ENCODE measurements at regions of chr7 and their contacts with region 1.

Region 1: DNA sequence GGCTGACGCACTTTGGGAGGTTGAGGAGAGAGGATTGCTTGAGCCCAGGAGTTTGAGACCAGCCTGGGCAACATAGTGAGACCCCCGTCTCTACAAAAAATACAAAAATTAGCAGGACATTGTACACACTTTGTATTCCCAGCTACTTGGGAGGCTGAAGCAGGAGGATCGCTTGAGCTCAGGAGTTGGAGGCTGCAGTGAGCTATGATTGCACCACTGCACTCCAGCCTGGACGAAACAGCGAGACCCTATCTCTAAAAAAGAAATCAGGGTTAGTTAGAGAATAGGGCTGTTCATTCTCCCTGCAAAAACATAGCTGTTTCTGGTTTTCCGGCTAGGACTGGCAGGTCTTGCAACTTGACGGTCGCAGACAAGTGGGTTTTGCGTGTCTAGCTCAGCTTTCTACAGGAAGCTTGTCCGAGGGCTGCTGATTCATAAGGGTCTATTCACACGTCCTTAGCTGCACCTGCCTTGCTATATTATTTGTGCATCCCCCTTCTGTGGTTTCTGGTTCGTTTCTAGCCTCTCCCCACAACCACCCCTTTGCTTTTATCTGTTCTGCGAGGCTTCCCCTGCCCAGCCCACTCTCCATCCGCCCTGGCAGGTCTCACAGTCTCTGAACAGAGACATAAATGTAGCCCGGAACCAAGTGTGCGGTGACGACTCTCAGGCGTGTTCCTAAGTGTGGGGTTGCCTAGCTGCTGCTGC is 10.7 kb downstream of the AMZ1 start:
- DNase-seq: peak; percentile 50
- ATAC-seq: peak; percentile 94
- H3K4me3 Mint-ChIP-seq: peak overlapping the region; percentile 69
- H3K27ac Mint-ChIP-seq: peak overlapping the region; percentile 75
- H3K4me1 Mint-ChIP-seq: peaks cover 21% of the 10 kb centered on the region
- H3K27me3 Mint-ChIP-seq: peaks cover 2% of the 10 kb centered on the region
- CTCF ChIP-seq: no peak

Region 2: GRCh38 chr7:2519119-2519930 is 179.4 kb before region 1 on chr7 and contains the start of gene LFNG:
- CTCF ChIA-PET with region 1: no interaction called
- POLR2A ChIA-PET with region 1: no interaction called
- intact Hi-C with region 1: loop called (anchors 5 kb)
- DNase-seq: peak; percentile 94
- ATAC-seq: peak; percentile 75
- H3K4me3 Mint-ChIP-seq: peak within 1 kb of the TSS; percentile 96
- H3K27ac Mint-ChIP-seq: peak within 1 kb of the TSS; percentile 87
- H3K4me1 Mint-ChIP-seq: peaks cover 49% of the 10 kb centered on the region
- H3K27me3 Mint-ChIP-seq: no peaks in the 10 kb centered on the region
- CTCF ChIP-seq: no peak
- total RNA-seq, gene LFNG: 87.4 and 95.8 TPM in 2 replicates

Region 3: DNA sequence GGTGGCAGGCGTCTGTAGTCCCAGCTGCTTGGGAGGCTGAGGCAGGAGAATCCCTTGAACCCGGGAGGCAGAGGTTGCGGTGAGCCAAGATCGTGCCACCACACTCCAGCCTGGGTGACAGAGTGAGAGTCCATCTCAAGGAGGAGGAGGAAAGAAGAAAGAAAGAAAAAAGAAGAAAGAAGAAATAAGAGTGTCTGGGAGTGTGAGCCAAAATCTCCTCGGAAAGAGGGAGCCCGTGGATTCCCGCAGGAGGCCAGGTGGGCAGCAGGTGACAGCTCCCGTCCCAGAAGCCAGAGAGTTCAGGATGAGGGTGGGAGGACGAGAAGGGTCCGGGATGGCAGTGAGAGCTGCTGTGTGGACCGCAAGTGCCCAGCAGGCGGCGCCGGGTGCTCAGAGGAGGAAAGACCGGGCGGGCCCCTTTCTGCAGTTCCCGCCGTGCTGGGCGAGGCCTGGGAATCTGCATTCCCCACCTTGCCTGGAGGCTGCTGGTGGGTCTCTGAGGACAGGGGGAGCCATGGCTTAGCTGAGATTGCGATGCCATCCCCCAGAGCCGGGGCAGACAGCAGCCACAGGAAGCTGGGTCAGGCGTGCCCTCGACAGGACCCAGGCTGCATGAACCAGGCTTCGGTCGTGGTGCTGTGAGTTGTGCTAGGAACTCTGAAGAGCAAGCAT is 27.9 kb before region 1 on chr7:
- CTCF ChIA-PET with region 1: interaction called, 12 read pairs
- POLR2A ChIA-PET with region 1: interaction called, 5 read pairs
- intact Hi-C with region 1: no loop called
- DNase-seq: peak; percentile 65
- ATAC-seq: peak; percentile 87
- H3K4me3 Mint-ChIP-seq: no peak overlapping the region
- H3K27ac Mint-ChIP-seq: no peak overlapping the region
- H3K4me1 Mint-ChIP-seq: peaks cover 7% of the 10 kb centered on the region
- H3K27me3 Mint-ChIP-seq: peaks cover 11% of the 10 kb centered on the region
- CTCF ChIP-seq: peak; percentile 64

Region 4: DNA sequence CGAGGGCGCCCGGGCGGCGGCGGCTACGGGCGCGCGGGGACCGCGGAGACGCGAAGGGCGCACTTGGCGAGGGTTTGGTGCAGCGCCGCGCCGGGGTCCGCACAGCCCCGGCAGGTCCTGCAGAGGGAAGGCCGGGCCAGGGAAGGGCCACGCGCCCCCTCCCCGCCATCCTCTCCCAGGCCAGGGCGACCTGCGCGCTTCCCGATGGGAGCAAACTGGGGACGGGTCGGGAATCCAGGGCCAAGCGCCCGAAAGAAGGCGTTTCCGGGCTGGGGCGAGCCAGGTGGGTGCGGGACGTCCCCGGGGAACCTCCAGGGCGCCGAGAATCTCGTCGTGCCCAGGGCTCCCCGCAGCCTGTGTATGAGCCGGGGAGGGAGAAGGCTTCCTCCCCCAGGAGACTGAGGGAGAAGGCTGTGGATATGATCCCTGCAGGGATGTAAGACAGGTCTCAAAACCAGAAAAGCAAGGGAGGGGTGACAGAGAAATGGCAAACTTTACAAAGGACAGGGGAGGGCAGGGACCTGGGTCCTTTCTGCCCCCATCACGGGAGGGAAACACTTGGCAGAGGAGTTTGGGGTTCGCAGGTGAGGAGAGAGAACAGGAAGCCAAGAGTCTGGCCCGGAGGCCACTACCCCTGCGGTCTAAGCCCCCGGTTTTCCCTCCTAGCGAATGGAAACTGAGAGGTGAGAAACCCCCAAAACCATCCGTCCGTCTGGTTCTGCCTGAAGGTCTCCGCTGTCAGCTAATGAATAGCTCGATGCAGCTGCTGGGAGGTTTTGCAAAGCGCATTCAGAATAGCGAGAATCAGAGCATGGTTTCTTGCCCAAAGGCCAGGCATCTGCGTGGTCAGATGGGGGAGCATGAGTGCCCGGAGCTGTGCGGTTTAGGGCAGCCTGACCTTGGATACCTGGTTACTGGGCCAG is 10.1 kb before region 1 on chr7:
- CTCF ChIA-PET with region 1: no interaction called
- POLR2A ChIA-PET with region 1: interaction called, 15 read pairs
- intact Hi-C with region 1: loop called (anchors 1 kb)
- DNase-seq: no peak
- ATAC-seq: peak; percentile 65
- H3K4me3 Mint-ChIP-seq: peak overlapping the region; percentile 45
- H3K27ac Mint-ChIP-seq: no peak overlapping the region
- H3K4me1 Mint-ChIP-seq: peaks cover 8% of the 10 kb centered on the region
- H3K27me3 Mint-ChIP-seq: peaks cover 29% of the 10 kb centered on the region
- CTCF ChIP-seq: no peak

Region 5: DNA sequence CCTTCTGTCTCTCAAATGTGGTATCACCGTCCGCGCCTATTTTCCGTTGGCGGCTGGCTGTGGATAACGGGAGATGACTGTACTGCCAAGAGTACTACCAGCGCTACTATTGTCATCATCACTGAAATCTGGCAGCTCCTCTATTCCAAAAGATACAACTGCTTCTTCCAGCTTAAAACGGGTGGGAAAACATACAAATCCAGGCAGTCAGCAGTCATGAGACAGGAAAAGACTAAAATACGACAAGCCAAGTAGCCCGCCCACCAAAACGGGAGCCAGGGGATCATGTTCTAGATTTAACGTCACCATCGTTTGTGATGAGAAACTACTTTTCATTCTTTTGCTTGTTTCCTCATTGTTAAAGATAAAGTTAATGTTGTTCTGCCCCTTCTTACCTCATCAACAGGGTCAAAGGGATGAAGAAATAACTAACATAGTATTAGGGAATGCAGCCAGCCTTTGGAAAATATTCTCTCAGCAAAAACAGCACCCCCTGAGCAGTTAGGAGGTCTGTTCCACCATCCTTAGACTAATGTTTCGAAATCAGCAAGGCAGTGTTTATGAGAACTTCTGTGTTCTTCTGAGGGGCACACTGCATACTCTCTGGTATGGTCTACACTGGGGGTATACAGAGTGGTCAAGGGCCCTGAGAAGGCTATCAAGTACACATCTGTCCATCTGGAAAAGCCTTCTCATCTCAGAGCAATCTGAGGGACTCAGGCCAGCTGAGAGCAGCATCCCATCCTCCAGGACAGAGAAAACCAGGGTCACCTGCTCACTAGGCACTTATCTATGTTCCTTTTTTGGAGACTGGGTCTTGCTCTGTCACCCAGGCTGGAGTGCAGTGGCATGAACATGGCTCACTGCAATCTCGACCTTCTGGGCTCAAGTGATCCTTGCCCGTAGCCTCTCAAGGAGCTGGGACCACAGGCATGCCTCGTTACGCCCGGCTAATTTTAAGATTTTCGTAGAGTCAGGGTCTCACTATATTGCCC is 97.9 kb after region 1 on chr7:
- CTCF ChIA-PET with region 1: no interaction called
- POLR2A ChIA-PET with region 1: no interaction called
- intact Hi-C with region 1: no loop called
- DNase-seq: no peak
- ATAC-seq: no peak
- H3K4me3 Mint-ChIP-seq: no peak overlapping the region
- H3K27ac Mint-ChIP-seq: no peak overlapping the region
- H3K4me1 Mint-ChIP-seq: peaks cover 51% of the 10 kb centered on the region
- H3K27me3 Mint-ChIP-seq: no peaks in the 10 kb centered on the region
- CTCF ChIP-seq: no peak